ENCODE measurements at regions of chr4 and their contacts with region 1.

Region 1: GRCh38 chr4:143207557-143207956 is 22.8 kb downstream of the USP38 start:
- DNase-seq: no peak
- H3K4me3 ChIP-seq: no peak overlapping the region
- H3K27ac ChIP-seq: no peak overlapping the region
- H3K4me1 ChIP-seq: peaks cover 0 to 4% (median 0%) of the 10 kb centered on the region in 4 donors
- H3K27me3 ChIP-seq: no peaks in the 10 kb centered on the region
- CTCF ChIP-seq: peak; percentile 47 to 51 (median 49)
- EP300 ChIP-seq: no peak
- POLR2A ChIP-seq: no peak

Region 2: DNA sequence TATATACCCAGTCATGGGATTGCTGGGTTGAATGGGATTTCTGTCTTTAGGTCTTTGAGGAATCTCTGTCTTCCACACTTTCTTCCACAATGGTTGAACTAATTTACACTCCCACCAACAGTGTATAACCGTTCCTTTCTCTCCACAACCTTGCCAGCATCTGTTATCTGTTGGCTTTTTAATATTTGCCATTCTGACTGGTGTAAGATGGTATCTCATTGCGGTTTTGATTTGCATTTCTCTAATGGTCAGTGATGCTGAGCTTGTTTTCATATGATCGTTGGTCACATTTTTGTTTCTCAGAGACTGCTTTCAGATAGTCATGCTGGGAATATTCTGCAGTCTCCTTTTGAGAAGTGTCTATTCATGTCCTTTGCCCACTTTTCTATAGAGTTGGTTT is 148.3 kb before region 1 on chr4:
- in situ Hi-C with region 1: no loop called
- intact Hi-C with region 1: no loop called
- DNase-seq: no peak
- H3K4me3 ChIP-seq: no peak overlapping the region
- H3K27ac ChIP-seq: no peak overlapping the region
- H3K4me1 ChIP-seq: no peaks in the 10 kb centered on the region
- H3K27me3 ChIP-seq: no peaks in the 10 kb centered on the region
- CTCF ChIP-seq: no peak
- EP300 ChIP-seq: no peak
- POLR2A ChIP-seq: no peak

Region 3: DNA sequence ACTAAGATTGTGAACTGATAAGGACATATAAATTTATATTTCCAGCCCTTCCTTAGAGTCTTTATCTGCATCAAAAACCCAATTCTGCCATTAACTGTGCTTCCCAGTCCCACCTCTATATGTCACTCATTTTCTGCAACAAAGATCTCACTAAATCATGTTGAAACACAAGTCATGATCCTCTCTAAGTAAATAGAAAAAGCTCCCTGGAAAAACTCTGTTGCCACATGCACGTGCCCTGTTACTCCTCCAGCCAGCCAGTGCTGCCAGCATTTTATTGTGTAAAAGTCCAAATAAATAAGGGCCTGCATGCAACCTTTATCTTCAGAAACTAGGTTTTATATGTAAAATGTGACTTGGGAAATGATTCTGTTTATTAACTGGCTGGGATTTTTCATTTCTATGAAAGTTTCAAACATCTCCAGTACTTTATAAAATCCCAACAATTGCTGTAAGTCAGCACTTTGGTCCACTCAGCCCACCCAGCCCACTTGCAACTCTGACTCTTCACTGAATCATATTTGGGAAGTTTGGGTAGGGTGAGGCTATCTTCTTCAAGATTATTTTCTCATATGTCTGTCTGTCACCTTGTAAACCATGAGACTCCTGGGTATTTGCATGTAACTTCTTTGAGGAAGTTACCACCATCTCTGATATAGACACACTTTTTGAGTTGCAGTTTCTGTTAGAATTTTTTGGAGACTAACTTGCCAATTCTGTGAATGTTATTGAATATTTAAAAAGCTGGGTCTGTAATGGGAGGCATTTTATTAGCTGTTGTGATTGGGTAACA is 266.0 kb after region 1 on chr4:
- in situ Hi-C with region 1: loop called in 2 of 4 experiments (anchors 10 to 25 kb)
- intact Hi-C with region 1: no loop called
- DNase-seq: no peak
- H3K4me3 ChIP-seq: no peak overlapping the region
- H3K27ac ChIP-seq: no peak overlapping the region
- H3K4me1 ChIP-seq: no peaks in the 10 kb centered on the region
- H3K27me3 ChIP-seq: no peaks in the 10 kb centered on the region
- CTCF ChIP-seq: no peak
- EP300 ChIP-seq: no peak
- POLR2A ChIP-seq: no peak